Caco-2 (cell line): ENCODE measurements at regions of chr2 and their contacts with region 1.

Region 1: DNA sequence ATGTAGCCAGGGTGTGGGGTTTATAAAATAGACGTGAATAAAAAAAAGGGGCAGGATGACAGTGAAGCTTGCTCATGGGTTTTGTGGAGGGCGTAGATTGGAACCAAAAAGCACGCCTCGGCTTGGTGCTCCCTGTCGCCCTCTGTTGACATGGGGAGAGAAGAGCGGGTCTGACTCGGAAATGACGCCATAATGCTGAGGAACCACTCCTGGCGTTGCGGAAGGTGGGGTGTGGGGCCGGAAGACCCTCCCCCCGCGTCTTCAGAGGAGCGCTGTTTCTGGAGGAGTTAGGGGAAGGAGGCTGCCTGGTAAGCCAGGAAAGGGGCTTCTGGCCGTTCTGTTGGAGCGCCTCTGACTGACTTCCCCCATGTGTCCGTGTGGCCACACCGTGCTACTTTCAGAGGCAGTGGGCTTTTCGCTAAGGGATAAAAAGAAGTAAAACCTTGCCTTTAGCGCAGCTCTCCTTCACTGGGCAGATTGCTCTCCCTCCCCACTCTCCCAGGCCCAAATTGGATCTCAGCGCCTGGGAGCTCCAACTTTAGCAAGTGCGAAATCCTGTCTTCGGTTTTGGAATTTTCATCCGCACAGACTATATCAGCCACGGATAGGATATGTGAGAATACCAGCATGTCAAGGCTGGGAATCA is 42.8 kb downstream of the PLEKHA3 start:
- DNase-seq: peak; percentile 83 to 87
- H3K4me3 ChIP-seq: peak overlapping the region; percentile 66
- H3K4me3 Mint-ChIP-seq: peak overlapping the region; percentile 89
- H3K27ac Mint-ChIP-seq: peak overlapping the region; percentile 87
- H3K4me1 ChIP-seq: 0 out of 2 replicates have a peak, but pooled peaks cover 2% of the 10 kb centered on the region
- H3K4me1 Mint-ChIP-seq: no peaks in the 10 kb centered on the region
- H3K27me3 ChIP-seq: no peaks in the 10 kb centered on the region
- H3K27me3 Mint-ChIP-seq: no peaks in the 10 kb centered on the region
- CTCF ChIP-seq: peak; percentile 77 to 89

Region 2: DNA sequence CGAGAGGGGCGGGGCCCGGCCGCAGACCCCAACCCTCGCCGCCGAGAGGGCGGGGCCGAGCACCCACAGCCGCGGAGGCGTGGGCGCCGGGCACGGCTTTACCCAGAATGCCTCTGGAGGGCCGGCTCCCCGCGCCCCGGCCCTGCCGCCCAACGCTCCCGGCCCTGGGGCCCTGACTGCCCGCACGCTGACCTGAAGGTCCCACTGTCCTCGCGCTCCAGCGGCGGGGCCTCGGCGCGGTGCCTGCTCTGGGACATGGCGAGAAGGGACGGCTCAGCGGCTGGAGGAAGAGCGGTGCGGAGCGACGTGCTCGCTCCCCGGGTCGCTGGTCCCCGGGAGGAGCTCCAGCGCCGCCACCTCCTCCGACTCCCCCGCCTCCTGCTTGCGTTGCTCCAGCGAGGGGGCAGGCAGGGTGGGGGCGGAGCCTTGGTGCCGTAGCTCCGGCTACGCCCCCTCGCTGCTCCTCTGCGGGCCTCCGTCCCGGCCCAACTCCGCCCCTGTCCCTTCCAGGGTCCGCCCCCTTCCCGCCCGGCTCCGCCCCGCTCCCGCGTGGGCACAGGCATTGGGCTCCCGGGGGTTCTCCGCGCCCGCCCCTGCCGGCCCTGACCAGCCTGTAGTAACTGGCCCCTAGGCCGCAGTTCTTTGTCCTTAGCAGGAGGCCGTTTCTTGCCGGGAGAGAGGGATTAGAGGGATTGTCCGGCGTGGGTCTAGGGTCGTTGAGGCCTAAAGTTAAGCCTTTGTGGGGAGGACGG is 72.1 kb before region 1 on chr2 and contains the starts of genes PJVK and PRKRA:
- CTCF ChIA-PET with region 1: no interaction called
- POLR2A ChIA-PET with region 1: interaction called, 4 read pairs
- intact Hi-C with region 1: loop called (anchors 1 kb)
- DNase-seq: peak; percentile 97 to 99
- H3K4me3 ChIP-seq: peak within 1 kb of the TSS; percentile 99
- H3K4me3 Mint-ChIP-seq: peak within 1 kb of the TSS; percentile 93
- H3K27ac Mint-ChIP-seq: peak within 1 kb of the TSS; percentile 100
- H3K4me1 ChIP-seq: no peaks in the 10 kb centered on the region
- H3K4me1 Mint-ChIP-seq: peaks cover 11% of the 10 kb centered on the region
- H3K27me3 ChIP-seq: no peaks in the 10 kb centered on the region
- H3K27me3 Mint-ChIP-seq: peaks cover 5% of the 10 kb centered on the region
- CTCF ChIP-seq: peak in 1 of 2 experiments; percentile 1
- total RNA-seq, gene PJVK: 2.1 and 2.9 TPM in 2 replicates
- total RNA-seq, gene PRKRA: 58.3 and 60.2 TPM in 2 replicates

Region 3: GRCh38 chr2:178707476-178707875 is 184.4 kb after region 1 on chr2:
- CTCF ChIA-PET with region 1: no interaction called
- POLR2A ChIA-PET with region 1: no interaction called
- intact Hi-C with region 1: no loop called
- DNase-seq: no peak
- H3K4me3 ChIP-seq: no peak overlapping the region
- H3K4me3 Mint-ChIP-seq: no peak overlapping the region
- H3K27ac Mint-ChIP-seq: no peak overlapping the region
- H3K4me1 ChIP-seq: no peaks in the 10 kb centered on the region
- H3K4me1 Mint-ChIP-seq: no peaks in the 10 kb centered on the region
- H3K27me3 ChIP-seq: no peaks in the 10 kb centered on the region
- H3K27me3 Mint-ChIP-seq: no peaks in the 10 kb centered on the region
- CTCF ChIP-seq: no peak